Activated B cell treated with CpG ODN at 0.5 μM for 24 hours (primary cell): ENCODE measurements at regions of chr5 and their contacts with region 1.

Region 1: GRCh38 chr5:150640311-150641005 is at the start of gene SYNPO:
- DNase-seq: no peak
- ATAC-seq: no peak
- H3K4me3 Mint-ChIP-seq: no peak within 1 kb of the TSS
- H3K27ac Mint-ChIP-seq: no peak within 1 kb of the TSS
- H3K4me1 Mint-ChIP-seq: no peaks in the 10 kb centered on the region
- H3K27me3 Mint-ChIP-seq: no peaks in the 10 kb centered on the region
- CTCF ChIP-seq: no peak
- total RNA-seq, gene SYNPO: 49.2 and 49.3 TPM in 2 replicates

Region 2: DNA sequence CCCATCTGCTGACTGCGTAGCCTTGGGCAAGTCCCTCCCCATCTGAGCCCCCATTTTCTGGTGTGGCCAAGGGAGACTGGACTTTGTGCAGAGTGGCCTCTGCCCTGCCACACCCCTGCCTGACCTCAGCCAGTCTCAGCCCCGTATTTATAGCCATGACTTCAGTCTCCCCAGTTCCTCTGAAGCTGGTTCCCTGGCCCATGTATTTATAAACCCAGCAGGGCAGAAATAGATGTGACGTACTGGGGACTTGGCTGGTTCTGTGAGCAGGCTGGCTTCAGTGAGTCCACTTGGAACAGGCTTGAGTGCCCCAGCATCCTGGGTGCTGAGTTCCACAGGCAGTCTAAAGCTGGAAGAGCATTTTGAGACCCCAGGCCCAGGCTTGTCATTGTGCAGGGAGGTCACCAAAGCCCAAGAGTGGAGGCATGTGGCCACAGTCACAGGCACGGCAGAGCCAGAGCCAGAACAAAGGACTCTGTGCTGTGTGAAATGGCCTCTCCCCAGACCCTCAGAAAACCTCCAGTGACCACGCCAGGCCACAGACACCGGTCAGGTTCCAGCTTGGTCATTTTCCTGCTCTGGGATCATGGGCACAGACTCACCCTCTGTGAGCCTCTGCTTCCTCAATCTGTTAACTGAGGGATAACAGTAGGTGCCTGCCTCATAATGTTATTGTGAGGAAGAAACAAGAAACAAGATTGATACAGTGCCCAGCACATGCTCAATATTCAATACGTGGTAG is 30.4 kb before region 1 on chr5:
- CTCF ChIA-PET with region 1: no interaction called
- POLR2A ChIA-PET with region 1: interaction called, 4 read pairs
- intact Hi-C with region 1: loop called (anchors 5 kb)
- DNase-seq: no peak
- ATAC-seq: no peak
- H3K4me3 Mint-ChIP-seq: no peak overlapping the region
- H3K27ac Mint-ChIP-seq: no peak overlapping the region
- H3K4me1 Mint-ChIP-seq: no peaks in the 10 kb centered on the region
- H3K27me3 Mint-ChIP-seq: peaks cover under 1% of the 10 kb centered on the region
- CTCF ChIP-seq: no peak